Prostate gland (tissue), 2 donors: ENCODE measurements at regions of chr4 and their contacts with region 1.

Region 1: GRCh38 chr4:17576932-17577665 is at the start of gene LAP3:
- DNase-seq: peak; percentile 98
- H3K4me3 ChIP-seq: peak within 1 kb of the TSS; percentile 53 to 71
- H3K27ac ChIP-seq: peak within 1 kb of the TSS; percentile 84 to 90
- H3K4me1 ChIP-seq: no peaks in the 10 kb centered on the region
- H3K27me3 ChIP-seq: no peaks in the 10 kb centered on the region
- CTCF ChIP-seq: peak in 2 of 4 experiments; percentile 7 to 13
- POLR2A ChIP-seq: peak; percentile 86
- total RNA-seq, gene LAP3: 55.8 to 98.1 TPM

Region 2: DNA sequence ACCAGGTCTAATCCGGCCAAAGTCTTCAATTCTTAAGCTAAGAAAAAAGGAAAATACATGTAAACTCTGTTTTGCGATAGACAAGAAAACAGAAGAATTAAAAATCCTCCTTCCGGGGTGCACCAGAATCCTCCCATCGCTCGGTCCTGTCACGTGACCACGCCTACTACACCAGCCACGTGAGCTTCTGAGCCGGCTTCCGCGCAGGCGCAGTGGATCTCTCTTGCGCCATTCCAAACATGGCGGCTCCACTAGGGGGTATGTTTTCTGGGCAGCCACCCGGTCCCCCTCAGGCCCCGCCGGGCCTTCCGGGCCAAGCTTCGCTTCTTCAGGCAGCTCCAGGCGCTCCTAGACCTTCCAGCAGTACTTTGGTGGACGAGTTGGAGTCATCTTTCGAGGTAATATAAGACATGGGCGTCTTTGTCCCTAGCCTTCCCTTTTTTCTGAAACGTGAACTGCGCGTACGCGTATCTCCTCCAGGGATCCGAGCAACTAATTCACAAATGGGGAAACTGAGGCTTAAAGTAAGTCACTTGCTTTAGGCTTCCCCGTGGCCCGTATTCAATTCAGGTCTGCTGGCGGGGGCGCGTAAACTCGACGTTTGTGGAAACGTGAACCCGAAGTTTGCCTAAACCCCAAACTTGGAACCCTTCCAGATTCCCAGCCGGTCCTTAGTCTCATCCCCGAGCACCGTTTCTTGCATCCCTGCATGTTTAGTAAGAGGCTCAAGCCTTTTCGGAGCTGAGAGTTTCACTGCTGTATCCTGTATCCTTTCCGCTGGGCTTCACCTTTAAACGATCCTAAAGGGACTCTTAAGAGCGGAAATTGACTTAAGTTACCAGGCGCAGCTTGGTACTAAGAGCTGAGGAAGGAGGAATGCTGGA is 37.6 kb after region 1 on chr4 and contains the start of gene MED28:
- intact Hi-C with region 1: loop called (anchors 2 kb)
- DNase-seq: peak; percentile 96
- H3K4me3 ChIP-seq: peak within 1 kb of the TSS; percentile 95 to 96
- H3K27ac ChIP-seq: peak within 1 kb of the TSS; percentile 86 to 87
- H3K4me1 ChIP-seq: peaks cover 10% of the 10 kb centered on the region
- H3K27me3 ChIP-seq: no peaks in the 10 kb centered on the region
- CTCF ChIP-seq: peak in 3 of 4 experiments; percentile 16 to 55 (median 20)
- POLR2A ChIP-seq: peak; percentile 78
- total RNA-seq, gene MED28: 17.2 to 21.3 TPM

Region 3: GRCh38 chr4:17740702-17741101 is 163.6 kb after region 1 on chr4:
- intact Hi-C with region 1: no loop called
- DNase-seq: no peak
- H3K4me3 ChIP-seq: no peak overlapping the region
- H3K27ac ChIP-seq: no peak overlapping the region
- H3K4me1 ChIP-seq: no peaks in the 10 kb centered on the region
- H3K27me3 ChIP-seq: no peaks in the 10 kb centered on the region
- CTCF ChIP-seq: no peak
- POLR2A ChIP-seq: no peak